Psoas muscle (tissue), 8 donors: ENCODE measurements at regions of chr6 and their contacts with region 1.

Region 1: GRCh38 chr6:163956571-163957407 is 542.3 kb downstream of the QKI start:
- DNase-seq: peak; percentile 80 to 91
- ATAC-seq: peak; percentile 85 to 90 (median 88)
- H3K4me3 ChIP-seq: peak overlapping the region; percentile 23
- H3K27ac ChIP-seq: peak overlapping the region; percentile 95
- H3K4me1 ChIP-seq: peaks cover 44% of the 10 kb centered on the region
- H3K27me3 ChIP-seq: no peaks in the 10 kb centered on the region
- CTCF ChIP-seq: peak; percentile 95

Region 2: DNA sequence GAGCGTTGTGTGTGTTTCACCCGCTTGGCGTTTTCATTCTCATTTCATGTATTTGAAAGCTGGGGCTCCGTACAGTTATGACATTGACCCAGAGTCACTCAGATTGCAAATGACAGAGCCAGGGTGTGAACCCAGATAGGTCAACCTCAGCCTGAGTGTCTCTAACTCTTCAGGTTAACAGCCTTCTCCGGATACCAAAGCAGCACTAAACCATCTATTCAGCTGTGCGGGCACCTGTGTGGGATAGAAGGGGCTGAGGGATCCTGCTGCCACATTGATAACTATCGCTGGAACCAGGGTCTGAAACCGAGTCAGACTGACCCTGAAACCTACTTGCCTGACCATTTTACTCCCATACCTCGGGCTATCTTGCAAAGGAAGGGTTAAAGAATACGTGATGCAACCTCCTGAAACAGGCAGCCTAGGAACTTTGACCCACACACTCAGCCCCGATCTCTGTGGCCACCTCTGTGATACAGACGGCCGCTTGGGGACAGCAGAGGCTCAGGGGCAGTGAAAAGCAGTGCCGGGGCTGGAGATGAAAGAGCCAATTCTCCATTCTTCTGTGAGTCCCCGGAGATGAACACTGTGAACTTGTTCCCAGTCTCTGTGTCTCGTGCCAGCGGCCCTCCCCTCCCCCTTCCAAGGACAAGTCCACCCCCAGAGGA is 775.8 kb before region 1 on chr6:
- intact Hi-C with region 1: loop called (anchors 2 kb)
- DNase-seq: peak; percentile 75 to 90
- ATAC-seq: peak; percentile 93 to 96 (median 94)
- H3K4me3 ChIP-seq: peak overlapping the region; percentile 54
- H3K27ac ChIP-seq: peak overlapping the region; percentile 48
- H3K4me1 ChIP-seq: peaks cover 27% of the 10 kb centered on the region
- H3K27me3 ChIP-seq: no peaks in the 10 kb centered on the region
- CTCF ChIP-seq: peak; percentile 89

Region 3: GRCh38 chr6:163413345-163414116 is 543.3 kb before region 1 on chr6:
- intact Hi-C with region 1: loop called in 1 of 2 experiments (anchors 1 kb)
- DNase-seq: peak; percentile 90 to 95
- ATAC-seq: peak; percentile 85 to 92 (median 89)
- H3K4me3 ChIP-seq: peak overlapping the region; percentile 73
- H3K27ac ChIP-seq: peak overlapping the region; percentile 98
- H3K4me1 ChIP-seq: peaks cover 1% of the 10 kb centered on the region
- H3K27me3 ChIP-seq: no peaks in the 10 kb centered on the region
- CTCF ChIP-seq: no peak

Region 4: DNA sequence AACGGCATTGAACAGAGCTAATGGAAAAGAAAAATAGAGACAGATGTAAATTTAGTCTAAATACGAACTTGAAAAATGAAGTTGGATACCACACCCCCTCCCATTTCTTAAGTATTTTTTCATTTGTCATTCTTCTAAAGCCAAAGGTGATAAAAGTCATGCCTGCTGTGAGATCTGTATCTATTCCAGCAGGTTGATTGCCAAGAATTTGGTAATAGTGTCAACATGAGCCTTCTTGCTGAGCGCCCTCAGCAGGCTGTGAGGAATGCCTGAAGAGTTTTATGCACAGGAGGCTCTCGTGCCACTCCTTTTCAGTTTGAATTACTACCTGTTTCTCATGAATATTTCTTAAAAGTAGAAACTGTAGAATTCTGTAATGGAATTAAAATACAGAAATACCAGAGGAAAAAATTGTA is 376.9 kb before region 1 on chr6:
- intact Hi-C with region 1: loop called (anchors 5 kb)
- DNase-seq: no peak
- ATAC-seq: peak; percentile 50 to 70 (median 65)
- H3K4me3 ChIP-seq: no peak overlapping the region
- H3K27ac ChIP-seq: peak overlapping the region; percentile 83
- H3K4me1 ChIP-seq: peaks cover 55% of the 10 kb centered on the region
- H3K27me3 ChIP-seq: no peaks in the 10 kb centered on the region
- CTCF ChIP-seq: peak; percentile 31

Region 5: DNA sequence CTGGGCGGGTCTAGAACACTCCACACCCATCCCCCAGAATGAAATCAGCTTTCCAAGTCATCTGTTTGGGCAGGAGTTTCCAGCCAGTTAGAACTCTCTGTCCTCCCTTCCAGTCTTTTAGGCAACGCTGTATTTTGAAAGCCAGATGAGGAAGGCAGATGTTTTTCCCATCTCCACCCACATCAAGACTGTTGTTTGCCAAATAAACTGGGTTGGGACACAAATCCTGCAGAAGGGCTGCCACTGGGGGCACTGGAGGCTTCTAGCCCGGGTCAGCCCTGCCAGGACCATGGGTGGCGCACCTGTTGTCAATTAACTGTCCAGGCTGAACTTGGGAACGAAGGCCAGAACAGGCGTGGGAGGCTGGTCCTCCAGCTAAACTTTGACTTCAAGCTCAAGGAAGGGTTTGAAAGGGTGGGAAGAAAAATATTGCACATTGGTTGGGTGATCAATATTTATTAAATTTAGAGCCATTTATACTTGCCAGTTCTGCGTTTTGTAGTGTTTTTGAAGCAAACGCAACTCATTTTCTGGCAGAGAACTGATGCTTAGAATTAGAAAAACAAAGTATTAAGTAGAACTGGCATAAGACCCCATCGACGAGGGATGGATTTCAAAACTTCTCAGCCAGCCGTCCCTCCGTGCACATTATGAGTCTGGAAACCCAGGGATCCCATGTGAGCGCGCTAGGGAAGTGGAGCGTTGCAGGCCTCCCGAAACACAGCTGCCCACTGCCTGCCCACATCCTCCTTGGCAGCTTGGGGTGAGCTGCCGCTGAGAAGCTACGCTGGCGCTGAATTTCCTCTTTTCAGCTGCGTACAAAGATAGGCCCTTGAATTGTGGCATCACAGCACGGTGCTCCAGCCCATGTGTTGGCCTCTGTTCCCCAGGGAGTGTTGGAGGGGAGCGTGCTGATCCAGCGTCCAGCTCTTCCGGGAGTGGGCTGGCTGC is 244.9 kb before region 1 on chr6:
- intact Hi-C with region 1: loop called (anchors 5 kb)
- DNase-seq: peak; percentile 94 to 95
- ATAC-seq: peak; percentile 66 to 86 (median 82)
- H3K4me3 ChIP-seq: no peak overlapping the region
- H3K27ac ChIP-seq: peak overlapping the region; percentile 76
- H3K4me1 ChIP-seq: peaks cover 61% of the 10 kb centered on the region
- H3K27me3 ChIP-seq: no peaks in the 10 kb centered on the region
- CTCF ChIP-seq: peak; percentile 48

Region 6: DNA sequence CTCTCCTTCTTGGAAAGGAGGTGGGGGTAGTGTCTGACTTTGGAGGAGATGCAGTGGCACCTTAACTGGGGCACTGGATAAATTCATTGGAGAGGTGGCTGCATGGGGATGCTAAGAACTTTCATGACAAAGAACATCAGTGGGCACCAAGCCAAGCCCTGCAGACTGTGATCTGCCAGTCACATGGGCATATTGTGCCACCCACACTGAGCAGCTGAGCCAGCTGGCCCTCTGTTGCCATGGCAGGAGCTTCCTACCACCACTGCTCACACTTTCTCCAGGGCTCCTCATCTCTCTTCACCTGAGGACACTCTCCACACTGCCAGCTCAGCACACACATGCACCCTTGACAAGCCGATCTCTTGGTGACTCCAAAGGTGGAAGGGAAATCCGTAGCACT is 173.4 kb after region 1 on chr6:
- intact Hi-C with region 1: no loop called
- DNase-seq: no peak
- ATAC-seq: peak in 2 of 4 donors; percentile 45 to 63
- H3K4me3 ChIP-seq: no peak overlapping the region
- H3K27ac ChIP-seq: no peak overlapping the region
- H3K4me1 ChIP-seq: no peaks in the 10 kb centered on the region
- H3K27me3 ChIP-seq: no peaks in the 10 kb centered on the region
- CTCF ChIP-seq: no peak